H1 (cell line): ENCODE measurements at regions of chr11 and their contacts with region 1.

Region 1: DNA sequence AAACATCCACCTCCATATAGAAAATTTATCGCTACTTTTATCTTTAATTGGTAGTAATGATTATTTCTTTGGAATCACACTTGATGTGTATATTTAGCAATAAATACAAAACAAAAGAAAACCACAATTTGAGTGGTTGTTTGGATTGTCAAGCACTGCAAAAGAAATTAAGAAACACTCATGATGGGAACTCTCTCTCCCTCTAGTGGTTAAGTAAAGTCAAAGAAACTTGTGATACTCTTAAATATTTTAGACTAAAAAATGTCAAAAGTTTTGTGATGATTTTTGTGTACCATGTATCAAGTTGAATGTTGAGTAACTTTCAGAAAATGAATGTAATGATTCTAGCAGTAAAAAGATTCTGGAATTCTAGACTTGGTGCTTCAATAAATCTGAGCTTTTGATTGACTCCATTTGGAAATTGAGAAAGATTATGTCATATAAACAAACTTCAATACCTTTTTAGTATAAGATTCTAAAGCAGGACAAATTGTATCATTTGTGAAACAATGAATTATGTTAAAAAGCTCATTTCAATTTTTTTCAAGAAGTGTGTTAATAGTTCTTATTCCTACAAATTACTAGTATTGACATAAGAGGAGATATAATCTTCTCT is 20.8 kb downstream of the MUC15 start:
- DNase-seq: no peak
- H3K4me3 ChIP-seq: no peak overlapping the region
- H3K27ac ChIP-seq: no peak overlapping the region
- H3K4me1 ChIP-seq: no peaks in the 10 kb centered on the region
- H3K27me3 ChIP-seq: no peaks in the 10 kb centered on the region
- CTCF ChIP-seq: peak in 1 of 3 experiments; percentile 26; a peak in 2 of 4 replicates
- EP300 ChIP-seq: no peak
- POLR2A ChIP-seq: no peak
- RAD21 ChIP-seq: peak in 1 of 2 experiments; percentile 28; a peak in 3 of 4 replicates

Region 2: GRCh38 chr11:26297189-26297975 is 253.9 kb before region 1 on chr11:
- CTCF ChIA-PET with region 1: interaction called, 11 read pairs
- POLR2A ChIA-PET with region 1: no interaction called
- DNase-seq: no peak
- H3K4me3 ChIP-seq: no peak overlapping the region
- H3K27ac ChIP-seq: no peak overlapping the region
- H3K4me1 ChIP-seq: no peaks in the 10 kb centered on the region
- H3K27me3 ChIP-seq: no peaks in the 10 kb centered on the region
- CTCF ChIP-seq: peak in 2 of 3 experiments; percentile 49 to 51; a peak in 3 of 4 replicates
- EP300 ChIP-seq: no peak
- POLR2A ChIP-seq: no peak
- RAD21 ChIP-seq: peak; percentile 76 to 78

Region 3: GRCh38 chr11:26470992-26471391 is 80.3 kb before region 1 on chr11:
- CTCF ChIA-PET with region 1: no interaction called
- POLR2A ChIA-PET with region 1: no interaction called
- DNase-seq: no peak
- H3K4me3 ChIP-seq: no peak overlapping the region
- H3K27ac ChIP-seq: no peak overlapping the region
- H3K4me1 ChIP-seq: no peaks in the 10 kb centered on the region
- H3K27me3 ChIP-seq: no peaks in the 10 kb centered on the region
- CTCF ChIP-seq: no peak
- EP300 ChIP-seq: no peak
- POLR2A ChIP-seq: no peak
- RAD21 ChIP-seq: peak in 1 of 2 experiments; percentile 8; a peak in 1 of 4 replicates

Region 4: GRCh38 chr11:26522912-26523610 is 28.2 kb before region 1 on chr11:
- CTCF ChIA-PET with region 1: interaction called, 23 read pairs
- POLR2A ChIA-PET with region 1: no interaction called
- DNase-seq: peak; percentile 21 to 45
- H3K4me3 ChIP-seq: peak overlapping the region in 3 of 4 experiments; percentile 28 to 55 (median 34); a peak in 4 of 8 replicates
- H3K27ac ChIP-seq: no peak overlapping the region
- H3K4me1 ChIP-seq: peaks cover 0 to 3% (median 1%) of the 10 kb centered on the region in 4 experiments; a peak in 2 of 7 replicates
- H3K27me3 ChIP-seq: peaks cover 0 to 5% (median 2%) of the 10 kb centered on the region in 4 experiments; a peak in 3 of 7 replicates
- CTCF ChIP-seq: peak in 2 of 3 experiments; percentile 40 to 68; a peak in 2 of 4 replicates
- EP300 ChIP-seq: no peak
- POLR2A ChIP-seq: 0 out of 3 replicates have a peak, but pooled peaks of 1 of the 2 experiments have one; percentile 26
- RAD21 ChIP-seq: peak; percentile 39 to 54; a peak in 3 of 4 replicates